Activated B cell treated with CpG ODN at 0.5 μM for 24 hours (primary cell): ENCODE measurements at regions of chr14 and their contacts with region 1.

Region 1: GRCh38 chr14:22814941-22815713 is at the start of gene SLC7A7:
- DNase-seq: no peak
- ATAC-seq: no peak
- H3K4me3 Mint-ChIP-seq: peak within 1 kb of the TSS; percentile 52
- H3K27ac Mint-ChIP-seq: peak within 1 kb of the TSS; percentile 91
- H3K4me1 Mint-ChIP-seq: peaks cover 82% of the 10 kb centered on the region
- H3K27me3 Mint-ChIP-seq: no peaks in the 10 kb centered on the region
- CTCF ChIP-seq: no peak
- total RNA-seq, gene SLC7A7: 30.8 and 33.7 TPM in 2 replicates

Region 2: DNA sequence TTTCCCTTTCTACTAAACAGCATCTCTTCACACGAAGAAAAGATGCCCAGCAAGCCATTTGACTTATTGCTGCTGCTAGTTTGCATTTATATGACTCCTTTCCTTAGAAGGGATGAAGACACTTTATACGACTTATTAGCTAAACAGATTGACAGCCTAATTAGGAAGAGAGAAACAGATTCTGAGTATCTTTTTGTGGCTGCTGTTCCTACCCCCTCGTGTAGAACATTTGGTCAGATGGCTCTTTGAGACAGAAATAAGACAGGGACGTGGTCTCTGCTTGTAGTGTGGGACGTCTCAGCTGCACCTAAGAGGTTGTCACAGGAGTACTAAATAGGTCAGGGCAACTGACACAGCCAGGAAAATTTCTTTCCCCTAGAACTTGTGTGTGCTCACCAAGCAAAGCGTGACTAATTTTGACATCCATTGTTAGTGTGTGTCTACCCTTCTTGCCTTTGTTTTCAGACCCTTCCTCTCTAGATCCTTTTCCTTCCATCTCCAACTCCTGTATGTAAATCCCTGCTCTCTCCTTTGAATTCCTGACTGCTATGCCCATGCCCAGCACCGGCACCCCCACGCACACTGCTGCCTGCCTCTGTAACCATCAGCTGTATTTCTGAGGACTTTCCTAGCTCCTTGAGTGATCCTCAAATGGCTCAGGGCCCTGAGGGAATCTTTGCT is 309.3 kb before region 1 on chr14:
- CTCF ChIA-PET with region 1: no interaction called
- POLR2A ChIA-PET with region 1: no interaction called
- intact Hi-C with region 1: no loop called
- DNase-seq: no peak
- ATAC-seq: peak; percentile 29
- H3K4me3 Mint-ChIP-seq: peak overlapping the region; percentile 49
- H3K27ac Mint-ChIP-seq: peak overlapping the region; percentile 90
- H3K4me1 Mint-ChIP-seq: peaks cover 70% of the 10 kb centered on the region
- H3K27me3 Mint-ChIP-seq: no peaks in the 10 kb centered on the region
- CTCF ChIP-seq: no peak

Region 3: GRCh38 chr14:22802860-22803686 is 12.1 kb before region 1 on chr14:
- CTCF ChIA-PET with region 1: interaction called, 3 read pairs
- POLR2A ChIA-PET with region 1: interaction called, 25 read pairs
- intact Hi-C with region 1: loop called (anchors 1 kb)
- DNase-seq: no peak
- ATAC-seq: peak; percentile 87
- H3K4me3 Mint-ChIP-seq: peak overlapping the region; percentile 74
- H3K27ac Mint-ChIP-seq: peak overlapping the region; percentile 93
- H3K4me1 Mint-ChIP-seq: peaks cover 81% of the 10 kb centered on the region
- H3K27me3 Mint-ChIP-seq: no peaks in the 10 kb centered on the region
- CTCF ChIP-seq: no peak

Region 4: GRCh38 chr14:22829661-22830442 is 14.7 kb after region 1 on chr14 and contains the start of gene MRPL52:
- CTCF ChIA-PET with region 1: no interaction called
- POLR2A ChIA-PET with region 1: interaction called, 69 read pairs
- intact Hi-C with region 1: no loop called
- DNase-seq: peak; percentile 76
- ATAC-seq: peak; percentile 94
- H3K4me3 Mint-ChIP-seq: peak within 1 kb of the TSS; percentile 93
- H3K27ac Mint-ChIP-seq: peak within 1 kb of the TSS; percentile 97
- H3K4me1 Mint-ChIP-seq: peaks cover 27% of the 10 kb centered on the region
- H3K27me3 Mint-ChIP-seq: no peaks in the 10 kb centered on the region
- CTCF ChIP-seq: no peak
- total RNA-seq, gene MRPL52: 142 and 150 TPM in 2 replicates